Testis (tissue), 5 donors: ENCODE measurements at regions of chr9 and their contacts with region 1.

Region 1: GRCh38 chr9:34591248-34591916 is 1.9 kb upstream of the CNTFR start:
- DNase-seq: peak; percentile 92
- H3K4me3 ChIP-seq: peak overlapping the region in 1 of 2 donors; percentile 40
- H3K27ac ChIP-seq: no peak overlapping the region
- H3K4me1 ChIP-seq: peaks cover 26% of the 10 kb centered on the region
- H3K27me3 ChIP-seq: no peaks in the 10 kb centered on the region
- CTCF ChIP-seq: peak; percentile 91 to 93 (median 92)
- POLR2A ChIP-seq: no peak

Region 2: DNA sequence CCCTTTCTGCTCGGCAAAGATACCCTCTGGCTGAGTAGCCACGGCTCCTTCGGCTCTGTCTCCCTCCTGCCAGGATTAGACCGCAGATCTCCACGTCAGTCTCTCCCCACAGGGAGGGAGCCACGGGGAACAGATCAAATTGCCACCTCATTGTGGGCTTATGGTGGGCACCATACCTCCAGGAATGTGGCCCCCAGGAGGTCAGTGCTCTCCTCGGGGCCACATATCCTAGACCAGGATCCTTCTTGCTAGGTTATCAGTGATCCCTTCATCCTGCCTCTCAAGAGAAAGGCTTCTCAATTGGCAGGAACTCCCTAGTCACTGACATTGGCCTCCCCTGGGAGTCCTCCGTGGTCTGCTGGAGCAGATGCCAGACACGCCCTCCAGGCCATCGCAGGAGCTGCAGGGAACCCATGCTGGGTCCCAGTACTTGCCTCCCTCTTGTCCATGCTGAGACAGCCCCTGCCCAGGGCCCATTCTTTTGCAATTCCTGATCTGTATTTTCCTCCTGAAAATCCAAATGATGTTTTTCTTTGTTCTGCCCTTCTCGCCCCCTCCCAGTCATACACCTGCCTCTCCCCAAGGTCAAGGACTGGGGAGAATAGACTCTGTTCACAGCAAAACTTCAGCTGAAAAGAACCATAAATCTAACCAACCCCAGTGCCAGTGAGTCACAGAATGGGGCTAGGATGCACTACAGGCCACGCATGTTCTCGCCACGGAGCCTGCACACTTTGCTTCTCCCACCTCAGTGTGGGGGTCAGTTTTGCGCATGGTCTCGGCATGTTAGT is 37.0 kb before region 1 on chr9:
- intact Hi-C with region 1: loop called (anchors 5 kb)
- DNase-seq: no peak
- H3K4me3 ChIP-seq: no peak overlapping the region
- H3K27ac ChIP-seq: no peak overlapping the region
- H3K4me1 ChIP-seq: peaks cover 2% of the 10 kb centered on the region
- H3K27me3 ChIP-seq: no peaks in the 10 kb centered on the region
- CTCF ChIP-seq: no peak
- POLR2A ChIP-seq: no peak